Activated CD4-positive, alpha-beta memory T cell treated with anti-CD3 and anti-CD28 coated beads, Interleukin-2, amount 10 ng/mL, durations not matched to agents 7 days and 5 days (primary cell): ENCODE measurements at regions of chr3 and their contacts with region 1.

Region 1: GRCh38 chr3:30606301-30607031 is at the start of gene TGFBR2:
- DNase-seq: peak; percentile 88
- H3K4me3 Mint-ChIP-seq: peak within 1 kb of the TSS; percentile 93
- H3K27ac Mint-ChIP-seq: peak within 1 kb of the TSS; percentile 92
- H3K4me1 Mint-ChIP-seq: peaks cover 57% of the 10 kb centered on the region
- H3K27me3 Mint-ChIP-seq: no peaks in the 10 kb centered on the region
- total RNA-seq, gene TGFBR2: 60.1 to 60.8 TPM

Region 2: DNA sequence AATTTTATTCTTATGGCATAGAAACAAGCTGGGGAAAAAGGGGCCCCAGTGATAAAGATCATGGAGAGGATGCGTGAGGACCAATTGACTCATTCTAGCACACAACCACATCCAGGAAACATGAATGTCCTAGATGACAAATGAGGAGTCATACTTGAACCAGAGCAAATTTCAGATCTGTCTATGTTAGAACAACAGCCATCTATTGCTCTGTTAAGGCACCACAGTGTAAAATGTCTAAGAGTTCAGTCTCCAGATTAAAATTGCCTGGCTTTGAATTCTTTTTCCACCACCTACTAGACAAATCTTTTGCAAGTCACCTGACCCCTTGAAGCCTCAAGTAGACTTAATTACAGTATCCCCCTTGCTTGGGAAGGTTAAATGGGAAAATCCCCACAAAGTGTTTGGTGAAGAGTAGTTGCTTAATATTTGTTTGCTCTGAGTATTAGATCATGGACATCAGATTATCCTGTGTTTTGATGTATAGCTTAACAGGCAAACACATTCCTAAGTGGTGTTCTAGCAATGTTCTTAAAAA is 258.7 kb before region 1 on chr3:
- CTCF ChIA-PET with region 1: no interaction called
- POLR2A ChIA-PET with region 1: interaction called, 10 read pairs
- DNase-seq: peak; percentile 66
- H3K4me3 Mint-ChIP-seq: peak overlapping the region; percentile 15
- H3K27ac Mint-ChIP-seq: peak overlapping the region; percentile 80
- H3K4me1 Mint-ChIP-seq: peaks cover 77% of the 10 kb centered on the region
- H3K27me3 Mint-ChIP-seq: peaks cover 12% of the 10 kb centered on the region

Region 3: DNA sequence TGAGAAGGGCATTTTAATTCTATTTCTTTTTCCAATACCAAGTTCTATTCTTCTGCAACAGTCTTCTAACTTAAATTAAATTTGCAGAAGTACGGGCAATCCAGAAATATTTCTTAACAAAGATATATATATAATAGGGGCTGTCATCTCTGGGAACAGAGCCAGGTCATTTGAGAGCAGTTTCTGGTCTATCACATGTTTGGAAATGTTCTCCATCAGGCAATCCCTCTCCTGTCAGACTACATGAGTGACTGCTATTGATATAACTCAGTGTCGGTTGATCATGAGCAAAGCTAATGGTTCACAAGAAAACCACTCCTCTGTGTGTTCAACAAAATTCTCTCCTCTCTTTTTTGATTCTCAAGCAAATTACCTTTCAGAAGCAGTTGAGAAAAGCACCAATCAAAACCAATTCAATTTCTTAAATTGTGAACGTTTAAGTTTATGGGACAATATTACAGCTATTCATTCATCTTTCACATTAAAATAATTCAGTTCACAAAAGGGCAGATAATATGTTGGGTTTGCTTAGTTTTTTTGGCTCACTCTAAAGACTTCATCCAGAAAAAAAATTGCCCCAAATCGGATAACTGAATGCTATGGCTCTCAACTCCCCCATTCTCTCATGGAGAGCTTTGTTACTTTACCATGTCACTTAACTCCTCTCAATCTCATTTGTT is 153.0 kb before region 1 on chr3:
- CTCF ChIA-PET with region 1: no interaction called
- POLR2A ChIA-PET with region 1: no interaction called
- DNase-seq: no peak
- H3K4me3 Mint-ChIP-seq: no peak overlapping the region
- H3K27ac Mint-ChIP-seq: no peak overlapping the region
- H3K4me1 Mint-ChIP-seq: no peaks in the 10 kb centered on the region
- H3K27me3 Mint-ChIP-seq: no peaks in the 10 kb centered on the region

Region 4: GRCh38 chr3:30578479-30578878 is 28.0 kb before region 1 on chr3:
- CTCF ChIA-PET with region 1: no interaction called
- POLR2A ChIA-PET with region 1: no interaction called
- DNase-seq: no peak
- H3K4me3 Mint-ChIP-seq: no peak overlapping the region
- H3K27ac Mint-ChIP-seq: no peak overlapping the region
- H3K4me1 Mint-ChIP-seq: peaks cover 2% of the 10 kb centered on the region
- H3K27me3 Mint-ChIP-seq: no peaks in the 10 kb centered on the region

Region 5: GRCh38 chr3:30623351-30623750 is 16.9 kb after region 1 on chr3:
- CTCF ChIA-PET with region 1: interaction called, 21 read pairs
- POLR2A ChIA-PET with region 1: interaction called, 671 read pairs
- DNase-seq: no peak
- H3K4me3 Mint-ChIP-seq: peak overlapping the region; percentile 22
- H3K27ac Mint-ChIP-seq: peak overlapping the region; percentile 65
- H3K4me1 Mint-ChIP-seq: peaks cover 90% of the 10 kb centered on the region
- H3K27me3 Mint-ChIP-seq: no peaks in the 10 kb centered on the region

Region 6: DNA sequence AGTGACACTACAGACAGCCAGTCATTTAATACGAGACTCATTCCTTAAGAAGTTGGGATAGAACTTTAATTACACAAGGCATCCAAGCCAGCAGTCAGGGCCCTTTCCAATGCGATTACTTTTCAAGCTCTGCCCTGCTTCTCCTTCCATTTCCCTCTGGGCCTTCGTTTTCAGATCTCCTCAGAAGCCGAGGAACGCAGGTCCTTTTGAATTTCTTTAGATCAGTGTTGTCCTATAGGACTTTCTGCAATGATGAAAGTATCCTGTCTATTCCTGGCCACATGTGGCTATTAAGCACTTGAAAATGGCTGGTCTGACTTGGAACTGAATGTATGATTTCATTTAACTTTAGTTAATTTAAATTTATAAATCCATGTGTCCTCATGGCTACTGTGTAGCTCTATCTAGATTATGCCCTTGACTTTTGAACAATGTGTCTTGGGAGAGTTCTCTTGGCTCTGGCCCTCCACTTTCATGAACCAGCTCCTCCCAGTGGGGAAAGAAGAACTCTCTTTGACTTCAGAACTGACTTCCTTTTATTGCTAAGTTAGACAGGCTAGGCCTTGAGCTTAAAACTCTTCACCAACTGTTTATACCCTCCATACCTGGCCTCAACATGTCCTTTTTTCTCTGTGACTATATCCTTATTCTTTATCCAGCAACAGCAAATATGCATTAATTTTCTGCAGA is 22.6 kb after region 1 on chr3:
- CTCF ChIA-PET with region 1: interaction called, 11 read pairs
- POLR2A ChIA-PET with region 1: interaction called, 671 read pairs
- DNase-seq: no peak
- H3K4me3 Mint-ChIP-seq: peak overlapping the region; percentile 19
- H3K27ac Mint-ChIP-seq: peak overlapping the region; percentile 97
- H3K4me1 Mint-ChIP-seq: peaks cover 89% of the 10 kb centered on the region
- H3K27me3 Mint-ChIP-seq: no peaks in the 10 kb centered on the region

Region 7: GRCh38 chr3:30644593-30645012 is 38.1 kb after region 1 on chr3:
- CTCF ChIA-PET with region 1: interaction called, 7 read pairs
- POLR2A ChIA-PET with region 1: interaction called, 671 read pairs
- DNase-seq: peak; percentile 66
- H3K4me3 Mint-ChIP-seq: peak overlapping the region; percentile 57
- H3K27ac Mint-ChIP-seq: peak overlapping the region; percentile 99
- H3K4me1 Mint-ChIP-seq: peaks cover 96% of the 10 kb centered on the region
- H3K27me3 Mint-ChIP-seq: no peaks in the 10 kb centered on the region

Region 8: DNA sequence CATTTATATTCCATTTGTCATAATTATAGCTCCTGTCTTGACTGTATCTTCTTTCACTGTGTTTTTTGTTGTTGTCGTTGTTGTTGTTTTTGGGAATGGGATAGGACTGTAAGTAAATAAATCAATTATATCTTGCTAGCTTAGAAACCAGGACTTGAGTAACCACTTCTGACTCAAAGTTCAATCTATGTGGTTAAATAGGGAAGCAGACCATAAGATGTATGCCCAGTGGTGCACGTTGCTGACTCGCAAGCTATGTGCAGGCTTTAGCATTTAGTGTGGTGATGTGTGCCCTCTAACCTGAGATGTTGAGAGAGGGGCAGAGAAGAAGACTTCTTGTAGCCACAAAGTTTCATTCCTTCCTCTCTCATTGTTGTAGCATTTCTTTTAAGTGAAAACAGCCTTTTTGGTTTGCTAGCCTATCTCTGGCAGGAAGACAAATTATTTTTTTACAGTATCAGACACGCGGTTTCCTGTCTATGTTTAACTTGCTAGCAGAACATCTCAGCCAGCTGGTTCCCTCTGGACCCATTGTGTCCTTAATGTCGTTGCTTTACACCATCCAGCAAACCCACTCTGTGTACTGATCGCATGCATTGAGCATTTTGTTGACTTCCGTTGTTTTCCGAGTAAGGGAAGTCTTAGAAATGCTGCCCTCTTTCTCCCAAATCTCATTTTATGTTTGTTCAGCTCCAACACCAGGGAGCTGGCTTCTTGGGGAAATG is 52.0 kb after region 1 on chr3:
- CTCF ChIA-PET with region 1: interaction called, 14 read pairs
- POLR2A ChIA-PET with region 1: interaction called, 111 read pairs
- DNase-seq: peak; percentile 64
- H3K4me3 Mint-ChIP-seq: peak overlapping the region; percentile 59
- H3K27ac Mint-ChIP-seq: peak overlapping the region; percentile 99
- H3K4me1 Mint-ChIP-seq: peaks cover 98% of the 10 kb centered on the region
- H3K27me3 Mint-ChIP-seq: no peaks in the 10 kb centered on the region

Region 9: DNA sequence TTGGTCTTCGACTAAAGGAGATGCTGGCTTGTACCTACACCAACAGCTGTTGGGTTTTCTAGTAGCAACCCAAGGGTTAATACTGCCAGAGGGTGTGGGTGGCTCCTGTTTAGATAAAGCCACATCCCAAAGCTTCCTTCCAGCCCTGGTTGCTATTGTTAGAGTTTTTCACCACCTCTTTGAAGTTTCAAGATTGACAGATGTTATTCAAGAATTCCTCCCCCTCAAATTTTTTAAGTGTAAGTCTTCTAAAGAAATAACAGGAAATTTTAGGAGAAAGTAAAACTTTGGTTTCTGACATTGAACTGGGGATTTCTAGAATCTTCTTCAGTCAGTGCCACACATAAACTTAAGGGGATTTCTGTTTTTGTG is 60.8 kb after region 1 on chr3:
- CTCF ChIA-PET with region 1: interaction called, 4 read pairs
- POLR2A ChIA-PET with region 1: interaction called, 38 read pairs
- DNase-seq: peak; percentile 46
- H3K4me3 Mint-ChIP-seq: no peak overlapping the region
- H3K27ac Mint-ChIP-seq: peak overlapping the region; percentile 81
- H3K4me1 Mint-ChIP-seq: peaks cover 85% of the 10 kb centered on the region
- H3K27me3 Mint-ChIP-seq: no peaks in the 10 kb centered on the region